ENCODE measurements at regions of chr17 and their contacts with region 1.

Region 1: DNA sequence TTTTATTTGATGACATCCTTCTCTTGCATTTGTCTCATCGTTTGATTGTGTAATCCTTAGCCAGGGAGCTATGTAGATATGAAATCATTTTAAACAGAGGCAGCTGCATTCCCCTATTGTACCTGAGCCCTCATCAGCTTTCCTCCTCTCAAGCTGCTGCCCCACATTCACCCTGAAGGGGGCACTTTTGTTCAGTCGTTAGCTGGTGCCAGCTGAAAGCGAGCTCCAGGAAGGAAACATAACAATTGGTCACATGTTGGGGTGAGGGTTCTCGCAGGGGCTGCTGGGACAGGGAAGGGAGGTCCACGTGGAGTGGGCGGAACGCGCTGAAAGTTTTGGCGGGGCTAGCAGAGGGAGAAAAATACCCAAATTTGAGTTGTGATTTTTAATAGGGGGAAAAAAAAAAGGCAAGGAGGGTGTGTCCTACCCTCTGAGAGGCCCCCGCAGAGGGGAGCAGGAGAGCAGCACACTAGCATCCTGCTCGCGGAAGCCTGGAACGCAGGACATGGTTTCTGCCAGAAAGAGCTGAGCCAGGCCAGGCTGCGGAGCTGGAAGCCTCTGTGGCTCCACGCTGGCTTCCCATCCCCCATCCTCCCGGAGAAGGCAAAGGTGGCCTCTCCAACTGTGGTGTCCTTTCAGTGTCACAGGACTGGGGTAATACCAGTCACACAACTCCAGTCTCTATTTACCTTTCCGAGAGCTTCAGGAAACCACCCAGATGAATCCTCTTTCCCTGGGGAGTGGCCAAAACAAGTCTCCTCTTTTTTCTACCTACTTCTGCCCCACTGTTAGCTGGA is 8.5 kb upstream of the MSL1 start:
- DNase-seq: peak; percentile 97
- ATAC-seq: peak; percentile 91
- H3K4me3 Mint-ChIP-seq: peak overlapping the region; percentile 81
- H3K27ac Mint-ChIP-seq: peak overlapping the region; percentile 81
- H3K4me1 Mint-ChIP-seq: peaks cover 44% of the 10 kb centered on the region
- H3K27me3 Mint-ChIP-seq: no peaks in the 10 kb centered on the region

Region 2: DNA sequence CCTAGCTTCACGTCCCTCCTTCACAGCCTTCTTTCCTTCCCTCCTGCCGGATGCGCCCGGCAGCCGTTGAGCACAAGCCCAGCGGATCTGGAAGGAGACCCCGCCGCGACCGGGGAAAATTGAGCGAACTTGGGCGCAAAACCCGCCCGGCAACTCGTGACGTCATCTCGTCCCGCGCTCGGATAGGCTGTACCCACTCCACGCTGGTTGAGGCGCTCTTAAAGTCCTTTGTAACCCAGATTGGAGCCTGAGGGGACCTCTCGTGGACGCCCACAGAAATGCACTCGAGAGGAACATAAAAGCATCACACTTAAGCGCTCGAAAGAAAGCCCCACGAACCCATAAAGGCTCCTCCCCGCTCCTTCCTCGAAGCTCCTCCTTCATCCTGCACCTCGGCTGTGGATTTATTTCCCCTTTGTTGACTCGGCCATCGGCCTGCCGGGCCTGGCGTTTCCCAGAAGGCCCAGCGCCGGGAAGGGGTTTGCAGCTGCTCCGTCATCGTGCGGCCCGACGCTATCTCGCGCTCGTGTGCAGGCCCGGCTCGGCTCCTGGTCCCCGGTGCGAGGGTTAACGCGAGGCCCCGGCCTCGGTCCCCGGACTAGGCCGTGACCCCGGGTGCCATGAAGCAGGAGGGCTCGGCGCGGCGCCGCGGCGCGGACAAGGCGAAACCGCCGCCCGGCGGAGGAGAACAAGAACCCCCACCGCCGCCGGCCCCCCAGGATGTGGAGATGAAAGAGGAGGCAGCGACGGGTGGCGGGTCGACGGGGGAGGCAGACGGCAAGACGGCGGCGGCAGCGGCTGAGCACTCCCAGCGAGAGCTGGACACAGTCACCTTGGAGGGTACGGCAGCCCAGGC is 132.7 kb before region 1 on chr17 and contains the start of gene PSMD3:
- CTCF ChIA-PET with region 1: interaction called, 13 read pairs
- DNase-seq: peak; percentile 99
- ATAC-seq: peak; percentile 96
- H3K4me3 Mint-ChIP-seq: peak within 1 kb of the TSS; percentile 97
- H3K27ac Mint-ChIP-seq: peak within 1 kb of the TSS; percentile 88
- H3K4me1 Mint-ChIP-seq: peaks cover 34% of the 10 kb centered on the region
- H3K27me3 Mint-ChIP-seq: peaks cover 14% of the 10 kb centered on the region
- total RNA-seq, gene PSMD3: 106 to 138 TPM

Region 3: GRCh38 chr17:40062329-40063186 is 50.8 kb before region 1 on chr17 and contains the start of gene THRA:
- CTCF ChIA-PET with region 1: interaction called, 33 read pairs
- DNase-seq: peak; percentile 75
- ATAC-seq: peak; percentile 94
- H3K4me3 Mint-ChIP-seq: peak within 1 kb of the TSS; percentile 80
- H3K27ac Mint-ChIP-seq: no peak within 1 kb of the TSS
- H3K4me1 Mint-ChIP-seq: peaks cover 25% of the 10 kb centered on the region
- H3K27me3 Mint-ChIP-seq: peaks cover 24% of the 10 kb centered on the region
- total RNA-seq, gene THRA: 5.9 to 8.3 TPM

Region 4: DNA sequence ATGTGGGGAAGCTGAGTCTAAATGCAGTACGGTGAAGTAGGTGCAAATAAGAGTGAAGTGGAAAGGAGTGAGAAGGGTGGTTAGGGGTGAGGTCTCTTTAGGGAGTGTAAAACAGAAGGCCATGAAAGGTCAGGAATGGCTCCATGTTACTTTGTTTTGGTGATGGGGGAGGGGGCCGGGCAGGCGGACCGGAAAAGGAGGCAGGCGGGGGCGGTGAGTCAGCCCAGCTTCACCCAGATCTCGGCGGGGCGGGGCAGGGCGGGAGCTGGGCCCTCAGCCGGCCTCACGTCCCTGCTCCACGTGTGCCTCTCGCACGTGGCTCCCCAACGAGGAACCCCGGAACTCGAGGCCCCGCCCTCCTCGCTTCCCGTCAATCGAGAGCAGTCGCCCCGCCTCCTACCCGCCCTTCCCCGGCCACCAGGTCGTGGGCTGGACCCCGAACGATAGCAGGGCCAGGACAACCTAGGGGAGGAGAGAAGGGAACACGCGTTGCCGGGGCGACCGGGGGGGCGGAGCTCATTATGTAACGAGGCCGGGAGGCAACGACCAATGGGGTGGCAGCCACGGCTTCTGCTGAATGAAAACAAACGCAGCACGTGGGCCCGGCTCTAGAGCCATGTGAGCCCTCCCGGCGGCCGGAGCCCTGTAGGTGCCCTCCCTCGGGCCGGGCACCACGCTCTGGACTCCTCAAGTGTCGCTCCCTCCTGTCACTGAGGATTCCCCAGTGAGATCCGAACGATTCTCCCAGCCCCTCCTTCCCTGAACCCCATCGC is 14.3 kb before region 1 on chr17:
- CTCF ChIA-PET with region 1: interaction called, 164 read pairs
- DNase-seq: peak; percentile 99
- ATAC-seq: peak; percentile 65
- H3K4me3 Mint-ChIP-seq: peak overlapping the region; percentile 73
- H3K27ac Mint-ChIP-seq: peak overlapping the region; percentile 85
- H3K4me1 Mint-ChIP-seq: peaks cover 86% of the 10 kb centered on the region
- H3K27me3 Mint-ChIP-seq: no peaks in the 10 kb centered on the region

Region 5: GRCh38 chr17:40157973-40158372 is 44.7 kb after region 1 on chr17:
- CTCF ChIA-PET with region 1: interaction called, 16 read pairs
- DNase-seq: no peak
- ATAC-seq: no peak
- H3K4me3 Mint-ChIP-seq: no peak overlapping the region
- H3K27ac Mint-ChIP-seq: peak overlapping the region; percentile 8
- H3K4me1 Mint-ChIP-seq: peaks cover 22% of the 10 kb centered on the region
- H3K27me3 Mint-ChIP-seq: no peaks in the 10 kb centered on the region

Region 6: GRCh38 chr17:40191237-40192208 is 78.2 kb after region 1 on chr17:
- CTCF ChIA-PET with region 1: interaction called, 77 read pairs
- DNase-seq: peak; percentile 80
- ATAC-seq: peak; percentile 91
- H3K4me3 Mint-ChIP-seq: peak overlapping the region; percentile 82
- H3K27ac Mint-ChIP-seq: no peak overlapping the region
- H3K4me1 Mint-ChIP-seq: peaks cover 17% of the 10 kb centered on the region
- H3K27me3 Mint-ChIP-seq: peaks cover 4% of the 10 kb centered on the region

Region 7: GRCh38 chr17:40247926-40248495 is 134.7 kb after region 1 on chr17:
- CTCF ChIA-PET with region 1: no interaction called
- DNase-seq: no peak
- ATAC-seq: no peak
- H3K4me3 Mint-ChIP-seq: no peak overlapping the region
- H3K27ac Mint-ChIP-seq: no peak overlapping the region
- H3K4me1 Mint-ChIP-seq: no peaks in the 10 kb centered on the region
- H3K27me3 Mint-ChIP-seq: no peaks in the 10 kb centered on the region

Region 8: DNA sequence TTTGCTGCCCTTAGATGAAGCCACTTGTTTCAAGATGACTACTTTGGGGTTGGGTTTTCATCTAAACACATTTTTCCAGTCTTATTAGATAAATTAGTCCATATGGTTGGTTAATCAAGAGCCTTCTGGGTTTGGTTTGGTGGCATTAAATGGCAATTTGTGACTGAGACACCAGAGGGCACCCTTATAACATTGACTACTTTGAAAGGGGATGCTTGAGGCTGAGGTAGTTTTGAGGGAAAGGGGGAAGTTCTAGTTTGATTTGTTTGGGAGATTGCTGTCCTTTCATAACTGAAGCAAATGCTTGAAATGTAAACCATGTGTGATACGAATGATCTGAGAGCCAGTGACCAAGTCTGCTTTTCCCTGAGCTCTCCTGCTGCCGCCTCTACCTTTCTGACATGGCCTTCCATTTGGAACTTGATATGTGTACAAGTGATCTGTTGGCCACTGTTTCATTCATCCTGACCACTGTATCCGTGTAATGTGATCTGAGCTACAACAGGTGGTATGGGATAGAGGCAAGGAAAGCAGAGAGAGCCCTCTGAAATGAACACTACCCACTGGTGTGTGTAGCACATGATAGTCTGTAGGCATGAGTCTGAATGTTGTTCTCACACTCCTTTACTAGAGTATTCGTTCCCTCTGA is 189.8 kb after region 1 on chr17:
- CTCF ChIA-PET with region 1: no interaction called
- DNase-seq: no peak
- ATAC-seq: peak; percentile 56
- H3K4me3 Mint-ChIP-seq: no peak overlapping the region
- H3K27ac Mint-ChIP-seq: no peak overlapping the region
- H3K4me1 Mint-ChIP-seq: peaks cover 14% of the 10 kb centered on the region
- H3K27me3 Mint-ChIP-seq: no peaks in the 10 kb centered on the region

Region 9: DNA sequence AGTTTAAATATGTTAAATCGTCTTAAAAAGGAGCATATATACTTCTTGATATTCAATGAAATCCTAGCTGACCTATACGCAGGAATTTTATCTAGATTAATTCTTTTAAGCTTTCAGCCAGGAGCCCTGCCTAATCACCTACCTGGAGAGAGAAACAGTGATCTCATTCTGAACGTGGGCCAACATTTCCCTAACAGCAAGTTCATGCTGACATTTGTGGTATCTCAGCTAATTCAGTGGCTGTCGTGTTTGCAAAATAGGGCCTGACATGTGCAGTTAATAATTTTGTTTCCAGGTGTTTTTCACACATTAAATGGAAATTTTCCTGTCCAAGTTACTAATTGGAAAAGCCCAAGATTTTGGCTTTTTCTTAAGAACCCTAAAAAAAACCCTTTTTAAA is 572.9 kb after region 1 on chr17:
- CTCF ChIA-PET with region 1: no interaction called
- DNase-seq: no peak
- ATAC-seq: no peak
- H3K4me3 Mint-ChIP-seq: no peak overlapping the region
- H3K27ac Mint-ChIP-seq: no peak overlapping the region
- H3K4me1 Mint-ChIP-seq: no peaks in the 10 kb centered on the region
- H3K27me3 Mint-ChIP-seq: peaks cover 37% of the 10 kb centered on the region